K562 (cell line): ENCODE measurements at regions of chr14 and their contacts with region 1.

Region 1: DNA sequence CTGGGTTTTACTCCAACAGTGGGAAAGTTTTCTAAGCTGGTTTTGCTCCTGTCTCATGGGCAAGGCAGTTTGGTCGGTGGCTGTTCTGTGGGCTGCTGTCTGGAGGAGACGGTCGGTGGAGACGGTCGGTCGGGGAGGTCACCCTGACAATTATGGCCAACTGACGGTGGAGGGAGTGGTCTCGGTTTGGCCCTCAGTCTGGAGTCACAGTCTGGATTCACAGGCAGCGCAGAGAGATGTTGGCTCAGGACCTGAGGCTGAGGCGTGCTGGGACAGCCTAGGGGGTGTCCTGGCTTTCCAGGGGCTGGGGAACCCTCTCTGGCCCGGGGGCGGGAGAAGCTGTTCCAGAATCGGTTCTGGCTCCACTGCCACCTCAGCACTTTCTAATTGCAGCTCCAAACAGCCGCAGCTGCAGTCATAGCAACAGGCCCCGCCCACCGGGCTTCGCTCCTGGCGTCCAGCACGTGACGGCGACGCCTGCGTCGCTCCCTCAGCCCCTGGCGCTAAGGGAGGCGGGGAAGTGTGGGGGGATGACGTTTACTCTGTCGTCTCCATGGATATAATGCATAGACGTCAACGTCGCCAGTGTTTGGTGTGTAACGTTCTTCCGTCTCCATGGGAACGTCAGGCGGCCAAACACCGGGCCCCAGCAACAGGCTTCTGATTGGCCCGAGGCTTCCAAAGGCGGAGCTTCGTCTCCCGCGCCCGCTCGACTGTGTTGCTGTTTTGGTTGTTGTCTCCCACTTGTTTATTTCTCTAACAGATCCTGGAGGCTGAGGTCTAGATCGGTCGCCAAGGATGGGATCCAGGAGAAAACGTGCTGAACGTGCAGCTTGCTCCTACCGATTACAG is 19.8 kb upstream of the FOS start:
- DNase-seq: peak; percentile 93 to 98 (median 94)
- ATAC-seq: peak; percentile 97
- H3K4me3 ChIP-seq: peak overlapping the region; percentile 37
- H3K27ac ChIP-seq: peak overlapping the region; percentile 94
- H3K4me1 ChIP-seq: peaks cover 6 to 22% of the 10 kb centered on the region in 2 experiments
- H3K27me3 ChIP-seq: no peaks in the 10 kb centered on the region
- CTCF ChIP-seq: no peak
- EP300 ChIP-seq: 0 out of 2 replicates have a peak, but pooled peaks have one; percentile 27
- POLR2A ChIP-seq: peak; percentile 45; the same call in 1 of the 2 replicates
- RAD21 ChIP-seq: no peak; a peak in 1 of 4 replicates

Region 2: GRCh38 chr14:75176142-75176820 is 82.6 kb before region 1 on chr14 and contains the start of gene TMED10:
- CTCF ChIA-PET with region 1: no interaction called
- POLR2A ChIA-PET with region 1: no interaction called
- in situ Hi-C with region 1: no loop called
- intact Hi-C with region 1: no loop called
- DNase-seq: peak; percentile 75 to 87 (median 80)
- ATAC-seq: peak; percentile 84
- H3K4me3 ChIP-seq: peak within 1 kb of the TSS; percentile 71
- H3K27ac ChIP-seq: peak within 1 kb of the TSS; percentile 96
- H3K4me1 ChIP-seq: peaks cover 4 to 8% of the 10 kb centered on the region in 2 experiments; a peak in 4 of 5 replicates
- H3K27me3 ChIP-seq: no peaks in the 10 kb centered on the region
- CTCF ChIP-seq: no peak; a peak in 1 of 6 replicates
- EP300 ChIP-seq: no peak
- POLR2A ChIP-seq: peak; percentile 85
- RAD21 ChIP-seq: 0 out of 4 replicates have a peak, but pooled peaks of 1 of the 2 experiments have one; percentile 9
- polyA plus RNA-seq, gene TMED10: 206 to 233 TPM

Region 3: DNA sequence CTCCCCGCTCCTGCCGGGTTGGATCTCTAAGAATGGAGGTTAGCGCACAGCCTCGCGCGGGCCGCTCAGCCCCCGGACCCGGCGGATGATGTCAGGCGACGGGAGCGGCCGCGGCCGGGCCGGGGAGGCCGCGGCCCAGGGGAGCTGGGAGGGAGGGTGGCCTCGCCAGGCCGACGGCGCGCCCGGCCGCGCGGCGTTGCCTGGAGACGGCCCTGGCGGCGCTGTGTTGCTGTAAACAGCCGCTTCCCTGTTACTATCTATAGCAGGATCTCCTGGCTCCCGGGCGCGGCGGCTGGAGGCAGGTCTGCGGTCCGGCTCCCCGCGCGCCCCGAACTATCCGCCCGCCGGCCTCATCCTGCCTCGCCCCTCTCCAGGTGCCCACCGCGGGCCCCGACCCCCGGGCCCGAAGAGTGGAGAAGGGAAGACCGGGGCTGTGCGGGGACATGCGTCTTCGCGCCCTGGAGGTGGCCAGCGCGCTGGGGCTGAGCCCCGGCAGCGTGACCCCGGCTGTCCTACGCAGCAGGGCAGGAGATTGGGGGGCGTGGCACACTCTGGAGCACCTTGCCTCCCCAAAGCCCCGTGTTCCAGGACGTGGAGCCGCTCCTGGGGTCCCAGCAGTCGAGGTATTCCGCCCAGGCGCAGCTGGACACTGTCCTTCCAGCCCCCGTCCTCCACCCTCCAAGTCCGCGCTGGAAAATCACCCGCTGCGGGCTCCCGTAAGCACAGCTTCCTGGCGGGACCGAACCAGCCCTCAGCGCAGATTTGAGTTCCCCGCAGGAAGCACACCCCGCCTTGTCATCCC is 18.4 kb after region 1 on chr14:
- CTCF ChIA-PET with region 1: no interaction called
- POLR2A ChIA-PET with region 1: interaction called, 12 read pairs
- in situ Hi-C with region 1: no loop called
- intact Hi-C with region 1: no loop called
- DNase-seq: peak; percentile 83 to 86 (median 85)
- ATAC-seq: peak; percentile 84
- H3K4me3 ChIP-seq: peak overlapping the region; percentile 71
- H3K27ac ChIP-seq: peak overlapping the region; percentile 98
- H3K4me1 ChIP-seq: peaks cover 11 to 37% of the 10 kb centered on the region in 2 experiments; a peak in 4 of 5 replicates
- H3K27me3 ChIP-seq: no peaks in the 10 kb centered on the region
- CTCF ChIP-seq: no peak
- EP300 ChIP-seq: no peak; the same call in 1 of the 2 replicates
- POLR2A ChIP-seq: no peak
- RAD21 ChIP-seq: no peak